Activated CD4-positive, alpha-beta T cell treated with anti-CD3 and anti-CD28 coated beads for 36 hours (primary cell): ENCODE measurements at regions of chr1 and their contacts with region 1.

Region 1: GRCh38 chr1:111203681-111204200 is 3.3 kb upstream of the DENND2D start:
- DNase-seq: peak; percentile 92
- ATAC-seq: peak; percentile 27
- H3K4me3 Mint-ChIP-seq: peak overlapping the region; percentile 96
- H3K27ac Mint-ChIP-seq: peak overlapping the region; percentile 98
- H3K4me1 Mint-ChIP-seq: peaks cover 56% of the 10 kb centered on the region
- H3K27me3 Mint-ChIP-seq: no peaks in the 10 kb centered on the region

Region 2: GRCh38 chr1:111082421-111083192 is 121.1 kb before region 1 on chr1:
- CTCF ChIA-PET with region 1: no interaction called
- POLR2A ChIA-PET with region 1: no interaction called
- intact Hi-C with region 1: no loop called
- DNase-seq: no peak
- ATAC-seq: no peak
- H3K4me3 Mint-ChIP-seq: no peak overlapping the region
- H3K27ac Mint-ChIP-seq: no peak overlapping the region
- H3K4me1 Mint-ChIP-seq: no peaks in the 10 kb centered on the region
- H3K27me3 Mint-ChIP-seq: peaks cover 12% of the 10 kb centered on the region

Region 3: DNA sequence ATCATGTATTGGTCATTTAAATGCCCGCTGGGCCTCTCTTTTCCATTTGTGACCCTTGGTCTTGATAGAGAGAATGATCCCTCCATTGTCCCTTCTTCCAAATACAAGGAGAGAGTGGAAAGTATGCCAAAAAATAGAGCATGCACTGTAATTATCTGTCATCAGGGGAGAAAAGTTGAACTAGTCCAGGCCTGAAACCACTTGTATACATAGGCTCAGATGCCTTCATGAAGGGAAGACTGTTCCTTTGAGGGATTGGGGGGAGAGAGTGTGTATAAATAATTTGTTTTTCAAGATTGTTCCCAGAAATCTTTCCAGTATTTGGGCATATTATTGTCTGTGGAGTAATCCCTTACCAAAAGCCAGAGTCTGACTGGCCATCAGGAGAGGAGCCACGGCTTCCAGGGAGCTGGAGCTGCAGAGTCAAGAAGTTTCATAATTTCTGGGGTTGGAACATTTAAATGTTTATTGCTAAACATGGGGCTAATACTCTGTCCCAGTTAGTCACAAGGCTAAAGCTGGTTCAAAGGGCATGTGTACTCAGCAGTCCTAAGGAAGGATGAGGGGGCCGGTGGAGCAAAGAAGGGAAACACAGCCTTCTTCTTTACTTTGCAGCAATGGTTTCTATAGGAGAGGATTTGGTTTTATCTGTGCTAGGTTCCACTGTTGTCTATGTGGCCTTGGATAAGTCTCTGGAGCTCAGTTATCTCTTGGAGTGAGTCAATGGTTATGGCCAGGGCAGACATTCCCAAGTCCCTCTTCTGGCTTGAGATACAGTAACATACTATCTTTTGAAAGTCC is 12.9 kb before region 1 on chr1:
- CTCF ChIA-PET with region 1: interaction called, 6 read pairs
- POLR2A ChIA-PET with region 1: interaction called, 5 read pairs
- intact Hi-C with region 1: loop called in 1 of 2 experiments (anchors 1 kb)
- DNase-seq: no peak
- ATAC-seq: no peak
- H3K4me3 Mint-ChIP-seq: no peak overlapping the region
- H3K27ac Mint-ChIP-seq: peak overlapping the region; percentile 65
- H3K4me1 Mint-ChIP-seq: peaks cover 98% of the 10 kb centered on the region
- H3K27me3 Mint-ChIP-seq: no peaks in the 10 kb centered on the region

Region 4: DNA sequence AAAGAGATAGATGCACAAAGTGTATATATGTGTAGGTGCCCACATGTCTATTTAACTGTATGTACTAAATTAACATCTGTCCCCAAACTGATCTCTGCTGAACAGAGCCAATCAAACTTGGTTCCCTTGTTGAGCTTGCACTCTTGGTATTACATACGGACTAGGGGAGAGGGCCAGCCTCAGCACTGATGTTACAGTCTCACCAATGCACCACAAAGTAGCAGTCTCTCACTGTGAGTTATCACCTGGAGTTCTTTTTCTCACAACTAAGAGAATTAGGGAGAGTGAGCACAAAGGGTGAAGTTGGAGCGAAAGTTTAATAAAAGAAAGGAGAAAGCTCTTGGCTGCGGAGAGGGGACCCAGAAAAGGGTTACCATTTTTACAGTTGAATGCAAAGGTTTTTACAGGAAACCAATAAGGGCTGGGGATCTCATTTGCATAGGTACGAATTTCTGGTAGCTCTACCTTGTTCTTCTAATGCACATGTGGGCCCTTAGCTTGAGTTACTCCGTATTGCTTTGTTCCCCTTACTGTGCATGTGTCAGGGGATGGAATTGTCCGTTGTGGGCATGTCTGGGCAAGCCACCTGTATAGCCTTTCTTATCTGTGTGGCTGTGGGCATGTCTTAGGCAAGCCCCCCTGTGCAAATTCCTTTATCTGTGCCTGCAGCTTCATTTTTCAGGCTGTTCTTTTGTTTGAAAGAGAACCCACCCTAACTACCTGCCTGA is 10.5 kb after region 1 on chr1:
- CTCF ChIA-PET with region 1: interaction called, 115 read pairs
- POLR2A ChIA-PET with region 1: interaction called, 19 read pairs
- intact Hi-C with region 1: loop called (anchors 1 kb)
- DNase-seq: no peak
- ATAC-seq: peak; percentile 18
- H3K4me3 Mint-ChIP-seq: peak overlapping the region; percentile 68
- H3K27ac Mint-ChIP-seq: peak overlapping the region; percentile 97
- H3K4me1 Mint-ChIP-seq: peaks cover 80% of the 10 kb centered on the region
- H3K27me3 Mint-ChIP-seq: no peaks in the 10 kb centered on the region